HepG2 (cell line): ENCODE measurements at regions of chr12 and their contacts with region 1.

Region 1: DNA sequence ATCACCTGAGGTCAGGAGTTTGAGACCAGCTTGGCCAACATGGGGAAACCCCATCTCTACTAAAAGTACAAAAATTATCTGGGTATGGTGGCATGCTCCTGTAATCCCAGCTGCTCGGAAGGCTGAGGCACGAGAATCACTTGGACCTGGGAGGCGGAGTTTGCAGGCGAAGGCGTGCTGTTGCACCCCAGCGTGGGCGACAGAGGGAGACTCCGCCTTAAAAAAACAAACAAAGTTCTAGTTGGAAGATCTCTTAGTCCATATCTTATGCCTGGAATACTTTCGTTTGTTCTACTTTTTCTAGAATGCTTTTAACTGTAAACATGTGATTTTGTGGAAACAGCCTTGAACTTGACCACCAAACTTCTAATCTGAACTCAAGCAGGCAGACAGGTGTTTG is 38.7 kb downstream of the PPHLN1 start:
- DNase-seq: no peak
- ATAC-seq: no peak
- H3K4me3 ChIP-seq: no peak overlapping the region
- H3K27ac ChIP-seq: no peak overlapping the region
- H3K4me1 ChIP-seq: 0 out of 2 replicates have a peak, but pooled peaks cover 5% of the 10 kb centered on the region
- H3K27me3 ChIP-seq: no peaks in the 10 kb centered on the region
- CTCF ChIP-seq: no peak
- EP300 ChIP-seq: no peak
- POLR2A ChIP-seq: no peak
- RAD21 ChIP-seq: no peak

Region 2: GRCh38 chr12:41011939-41012338 is 1352.8 kb before region 1 on chr12:
- CTCF ChIA-PET with region 1: no interaction called
- POLR2A ChIA-PET with region 1: no interaction called
- in situ Hi-C with region 1: no loop called
- intact Hi-C with region 1: loop called (anchors 5 kb)
- DNase-seq: peak; percentile 15
- ATAC-seq: peak; percentile 64
- H3K4me3 ChIP-seq: no peak overlapping the region
- H3K27ac ChIP-seq: no peak overlapping the region
- H3K4me1 ChIP-seq: no peaks in the 10 kb centered on the region
- H3K27me3 ChIP-seq: no peaks in the 10 kb centered on the region
- CTCF ChIP-seq: peak; percentile 50
- EP300 ChIP-seq: no peak
- POLR2A ChIP-seq: no peak
- RAD21 ChIP-seq: no peak